ENCODE measurements at regions of chr3 and their contacts with region 1.

Region 1: DNA sequence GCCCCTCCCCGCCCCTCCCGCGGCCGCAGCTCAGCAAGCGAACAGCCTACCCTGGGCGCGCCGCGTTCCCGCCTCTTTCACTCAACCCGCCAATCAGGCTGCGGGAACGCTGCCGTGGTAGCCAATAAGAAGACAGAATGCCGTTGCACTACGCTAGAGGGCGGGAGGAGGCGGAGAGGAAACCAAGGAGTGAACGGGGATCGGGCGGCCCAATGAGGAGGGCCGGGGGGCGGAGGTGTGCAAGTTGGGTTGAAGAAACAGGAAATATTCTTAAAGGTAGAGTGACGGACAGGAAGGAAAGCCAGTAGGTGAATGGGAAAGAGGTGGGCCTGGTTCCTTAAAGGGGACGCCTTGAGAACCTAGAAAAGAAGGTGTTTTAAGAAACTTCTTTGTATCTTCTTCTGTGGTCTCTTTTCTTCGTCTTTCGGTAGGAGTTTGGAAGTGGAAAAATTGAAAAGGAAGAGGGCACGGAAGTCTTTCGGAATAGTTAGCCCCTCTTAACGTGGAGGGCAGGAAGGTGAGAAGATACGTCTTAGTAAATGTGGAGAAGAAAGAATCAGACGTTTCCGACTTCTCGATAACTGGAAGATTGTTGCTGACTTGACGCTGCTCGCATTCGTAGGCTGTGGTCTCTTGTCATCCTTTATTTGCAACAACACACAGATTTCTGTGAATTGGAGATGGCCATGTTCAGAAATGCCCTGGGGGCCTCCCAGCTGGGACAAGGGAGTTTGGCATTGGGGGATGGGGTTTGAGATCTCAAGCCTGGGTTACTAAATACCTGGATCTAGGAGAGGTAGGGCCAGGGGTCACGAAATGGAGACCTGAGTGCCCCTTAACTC is 437 bp upstream of the USF3 start:
- DNase-seq: peak; percentile 99
- H3K4me3 Mint-ChIP-seq: no peak overlapping the region
- H3K27ac Mint-ChIP-seq: no peak overlapping the region
- H3K4me1 Mint-ChIP-seq: peaks cover 20% of the 10 kb centered on the region
- H3K27me3 Mint-ChIP-seq: no peaks in the 10 kb centered on the region

Region 2: DNA sequence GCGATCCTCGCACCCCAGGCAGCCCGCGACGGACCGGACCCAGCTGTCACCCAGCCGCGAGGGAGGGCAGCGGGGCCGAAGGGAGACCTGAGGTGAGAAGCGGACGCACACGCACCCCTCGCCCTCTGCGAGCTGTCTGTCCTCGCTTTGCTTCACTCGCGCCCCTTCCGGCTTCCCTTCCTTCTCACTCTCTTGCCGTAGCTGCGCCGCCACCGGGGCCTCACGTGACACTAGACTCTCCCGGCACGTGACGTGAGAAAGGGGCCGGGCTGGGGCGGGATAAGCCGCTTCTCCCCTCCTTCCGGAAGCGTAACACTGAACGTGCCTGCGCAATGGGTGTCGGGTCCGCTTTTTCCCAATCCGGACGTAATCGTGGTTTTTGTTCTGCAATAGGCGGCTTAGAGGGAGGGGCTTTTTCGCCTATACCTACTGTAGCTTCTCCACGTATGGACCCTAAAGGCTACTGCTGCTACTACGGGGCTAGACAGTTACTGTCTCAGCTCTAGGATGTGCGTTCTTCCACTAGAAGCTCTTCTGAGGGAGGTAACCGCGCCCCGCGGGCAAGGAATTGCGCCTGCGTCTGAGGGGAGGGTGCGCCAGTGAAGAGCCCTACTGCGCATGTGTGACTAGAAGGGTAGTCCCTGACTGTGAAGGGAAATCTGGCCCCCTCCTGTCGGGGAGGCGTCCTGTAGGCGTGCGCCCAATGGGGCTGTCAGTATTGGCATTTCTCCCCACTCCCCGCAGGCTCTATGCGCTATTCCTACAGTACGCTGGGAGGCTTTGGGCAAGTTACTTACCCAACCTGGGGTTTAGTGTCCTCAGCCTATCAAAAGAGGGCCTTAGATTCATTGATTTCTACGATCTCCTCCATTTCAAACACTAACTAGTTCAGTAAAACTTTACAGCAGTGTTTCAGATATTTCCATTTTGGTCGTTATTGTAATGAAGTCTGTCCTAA is 1134.9 kb before region 1 on chr3 and contains the starts of genes ATG3 and SLC35A5:
- intact Hi-C with region 1: loop called (anchors 5 kb)
- DNase-seq: peak; percentile 98
- H3K4me3 Mint-ChIP-seq: peak within 1 kb of the TSS; percentile 92
- H3K27ac Mint-ChIP-seq: peak within 1 kb of the TSS; percentile 99
- H3K4me1 Mint-ChIP-seq: peaks cover 49% of the 10 kb centered on the region
- H3K27me3 Mint-ChIP-seq: no peaks in the 10 kb centered on the region
- total RNA-seq, gene ATG3: 61.1 and 61.6 TPM in 2 replicates
- total RNA-seq, gene SLC35A5: 12.6 and 17.8 TPM in 2 replicates

Region 3: GRCh38 chr3:113531826-113532697 is 164.8 kb before region 1 on chr3 and contains the start of gene SIDT1:
- intact Hi-C with region 1: loop called (anchors 5 kb)
- DNase-seq: peak; percentile 68
- H3K4me3 Mint-ChIP-seq: peak within 1 kb of the TSS; percentile 91
- H3K27ac Mint-ChIP-seq: peak within 1 kb of the TSS; percentile 95
- H3K4me1 Mint-ChIP-seq: peaks cover 53% of the 10 kb centered on the region
- H3K27me3 Mint-ChIP-seq: peaks cover 19% of the 10 kb centered on the region
- total RNA-seq, gene SIDT1: 10.2 and 11.7 TPM in 2 replicates

Region 4: DNA sequence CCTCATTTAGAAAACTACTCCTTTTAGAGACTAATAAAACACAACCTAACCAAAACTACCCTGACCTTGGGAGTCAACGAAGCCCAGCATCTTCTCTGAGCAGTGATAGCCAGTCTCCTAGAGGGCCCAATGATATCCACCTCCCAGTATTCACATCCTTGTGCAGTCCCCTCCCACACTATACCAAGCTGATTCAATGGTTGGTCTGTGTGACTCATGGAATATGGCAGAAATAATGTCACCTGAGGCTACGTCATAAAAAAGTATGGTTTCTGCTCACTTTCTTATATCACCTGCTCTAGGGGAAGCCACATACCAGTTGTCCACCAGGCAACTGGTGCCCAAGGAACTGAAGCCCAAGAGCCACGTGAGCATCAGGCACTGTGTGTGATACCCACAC is 20.9 kb after region 1 on chr3:
- intact Hi-C with region 1: loop called (anchors 2 kb)
- DNase-seq: no peak
- H3K4me3 Mint-ChIP-seq: no peak overlapping the region
- H3K27ac Mint-ChIP-seq: no peak overlapping the region
- H3K4me1 Mint-ChIP-seq: peaks cover 13% of the 10 kb centered on the region
- H3K27me3 Mint-ChIP-seq: no peaks in the 10 kb centered on the region

Region 5: GRCh38 chr3:113947372-113948014 is 250.6 kb after region 1 on chr3 and contains the start of gene ZDHHC23:
- intact Hi-C with region 1: loop called (anchors 2 kb)
- DNase-seq: peak; percentile 64
- H3K4me3 Mint-ChIP-seq: peak within 1 kb of the TSS; percentile 75
- H3K27ac Mint-ChIP-seq: peak within 1 kb of the TSS; percentile 61
- H3K4me1 Mint-ChIP-seq: peaks cover 7% of the 10 kb centered on the region
- H3K27me3 Mint-ChIP-seq: peaks cover 53% of the 10 kb centered on the region
- total RNA-seq, gene ZDHHC23: 2.6 and 2.9 TPM in 2 replicates

Region 6: DNA sequence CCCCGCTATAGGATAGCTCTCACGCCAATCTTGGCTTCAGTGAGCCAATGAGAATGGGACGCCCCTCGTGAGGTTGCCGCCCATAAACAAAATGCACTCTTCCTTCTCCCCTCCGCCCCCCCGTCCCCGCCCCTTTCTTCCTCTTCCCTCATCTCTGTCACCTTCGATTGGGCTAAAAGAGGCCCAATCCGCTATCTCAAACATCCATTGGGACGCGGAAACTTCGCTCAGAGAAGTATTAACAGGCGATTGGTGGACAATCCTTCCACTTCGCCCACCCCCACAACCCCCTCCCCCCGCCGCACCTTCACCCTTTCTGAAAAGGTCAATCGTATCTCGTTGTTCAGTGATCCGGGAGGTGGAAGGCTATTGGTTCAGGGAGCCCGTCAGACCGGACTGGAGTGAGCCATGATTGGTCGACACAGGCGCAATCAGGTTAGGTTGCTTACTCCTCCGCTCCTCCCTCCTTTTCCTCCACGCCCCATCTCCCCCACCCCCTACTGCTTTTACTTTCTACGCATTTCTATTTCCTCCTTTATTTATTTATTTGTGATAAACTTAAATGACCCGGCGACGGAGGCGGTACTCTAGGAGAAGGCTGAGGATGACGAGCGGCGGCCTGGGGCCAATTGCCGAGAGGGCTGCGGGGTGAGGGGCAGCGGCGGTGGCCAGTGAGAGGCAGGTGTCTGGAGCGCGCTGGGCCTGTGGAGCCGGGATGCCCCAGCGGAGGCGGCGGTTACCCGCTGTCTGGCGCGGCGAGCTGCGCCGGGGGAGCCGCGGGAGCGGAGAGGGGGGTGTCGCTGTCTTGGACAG is 1450.7 kb after region 1 on chr3:
- intact Hi-C with region 1: loop called (anchors 5 kb)
- DNase-seq: peak; percentile 96
- H3K4me3 Mint-ChIP-seq: peak overlapping the region; percentile 97
- H3K27ac Mint-ChIP-seq: peak overlapping the region; percentile 99
- H3K4me1 Mint-ChIP-seq: peaks cover 17% of the 10 kb centered on the region
- H3K27me3 Mint-ChIP-seq: peaks cover 9% of the 10 kb centered on the region

Measured in activated T-helper 2 cell treated with anti-CD3 and anti-CD28 coated beads, Interferon-gamma antibody, Interleukin-2, Interleukin-4, amounts not matched to agents 10 μg/mL and 5 μg/mL and 100 μg/mL, durations not matched to agents 14 hours and 24 hours and 36 hours (primary cell).